Psoas muscle (tissue), 8 donors: ENCODE measurements at regions of chr11 and their contacts with region 1.

Region 1: GRCh38 chr11:114075891-114076441 is 16.5 kb downstream of the ZBTB16 start:
- DNase-seq: peak; percentile 65 to 76
- ATAC-seq: peak in 1 of 4 donors; percentile 4
- H3K4me3 ChIP-seq: peak overlapping the region; percentile 54
- H3K27ac ChIP-seq: peak overlapping the region; percentile 99
- H3K4me1 ChIP-seq: peaks cover 97% of the 10 kb centered on the region
- H3K27me3 ChIP-seq: no peaks in the 10 kb centered on the region
- CTCF ChIP-seq: peak; percentile 78

Region 2: GRCh38 chr11:114036156-114036811 is 39.7 kb before region 1 on chr11:
- intact Hi-C with region 1: no loop called
- DNase-seq: peak; percentile 88 to 94
- ATAC-seq: peak; percentile 85 to 93 (median 88)
- H3K4me3 ChIP-seq: peak overlapping the region; percentile 66
- H3K27ac ChIP-seq: peak overlapping the region; percentile 75
- H3K4me1 ChIP-seq: peaks cover 40% of the 10 kb centered on the region
- H3K27me3 ChIP-seq: no peaks in the 10 kb centered on the region
- CTCF ChIP-seq: peak; percentile 87

Region 3: DNA sequence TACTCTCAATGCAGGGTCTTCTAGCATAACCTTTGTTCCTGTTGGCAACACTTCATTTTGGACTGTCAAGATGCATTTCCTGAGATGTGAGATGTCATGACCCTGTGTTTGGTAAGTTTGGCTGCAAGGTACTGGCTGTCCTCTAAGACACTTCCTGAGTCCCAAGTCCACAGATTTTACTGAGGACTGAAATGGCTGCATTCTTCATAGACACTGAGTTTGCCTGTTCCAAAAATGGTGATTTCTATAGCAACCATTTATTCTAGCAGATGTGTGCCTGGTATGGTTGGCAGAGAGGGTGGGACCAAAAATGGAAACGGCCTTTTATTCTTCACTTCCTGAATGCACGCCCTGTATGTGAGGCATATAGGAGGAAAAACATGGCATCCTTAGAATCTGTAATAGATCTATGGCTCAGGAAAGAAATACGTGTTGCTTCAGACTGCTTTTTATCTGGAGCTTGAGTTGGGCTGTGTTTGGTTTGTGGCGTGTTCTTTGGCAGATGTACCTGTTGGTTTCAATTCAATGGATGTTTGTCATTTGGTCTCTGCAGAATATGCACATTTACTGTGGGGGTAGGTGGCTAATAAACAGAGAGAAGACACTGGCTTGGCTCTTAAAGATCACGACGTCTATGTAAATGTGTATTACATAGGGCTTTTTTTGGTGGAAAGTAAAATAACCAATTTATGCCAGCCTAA is 46.0 kb after region 1 on chr11:
- intact Hi-C with region 1: loop called in 1 of 2 experiments (anchors 5 kb)
- DNase-seq: no peak
- ATAC-seq: no peak
- H3K4me3 ChIP-seq: no peak overlapping the region
- H3K27ac ChIP-seq: peak overlapping the region; percentile 99
- H3K4me1 ChIP-seq: peaks cover 89% of the 10 kb centered on the region
- H3K27me3 ChIP-seq: no peaks in the 10 kb centered on the region
- CTCF ChIP-seq: no peak

Region 4: DNA sequence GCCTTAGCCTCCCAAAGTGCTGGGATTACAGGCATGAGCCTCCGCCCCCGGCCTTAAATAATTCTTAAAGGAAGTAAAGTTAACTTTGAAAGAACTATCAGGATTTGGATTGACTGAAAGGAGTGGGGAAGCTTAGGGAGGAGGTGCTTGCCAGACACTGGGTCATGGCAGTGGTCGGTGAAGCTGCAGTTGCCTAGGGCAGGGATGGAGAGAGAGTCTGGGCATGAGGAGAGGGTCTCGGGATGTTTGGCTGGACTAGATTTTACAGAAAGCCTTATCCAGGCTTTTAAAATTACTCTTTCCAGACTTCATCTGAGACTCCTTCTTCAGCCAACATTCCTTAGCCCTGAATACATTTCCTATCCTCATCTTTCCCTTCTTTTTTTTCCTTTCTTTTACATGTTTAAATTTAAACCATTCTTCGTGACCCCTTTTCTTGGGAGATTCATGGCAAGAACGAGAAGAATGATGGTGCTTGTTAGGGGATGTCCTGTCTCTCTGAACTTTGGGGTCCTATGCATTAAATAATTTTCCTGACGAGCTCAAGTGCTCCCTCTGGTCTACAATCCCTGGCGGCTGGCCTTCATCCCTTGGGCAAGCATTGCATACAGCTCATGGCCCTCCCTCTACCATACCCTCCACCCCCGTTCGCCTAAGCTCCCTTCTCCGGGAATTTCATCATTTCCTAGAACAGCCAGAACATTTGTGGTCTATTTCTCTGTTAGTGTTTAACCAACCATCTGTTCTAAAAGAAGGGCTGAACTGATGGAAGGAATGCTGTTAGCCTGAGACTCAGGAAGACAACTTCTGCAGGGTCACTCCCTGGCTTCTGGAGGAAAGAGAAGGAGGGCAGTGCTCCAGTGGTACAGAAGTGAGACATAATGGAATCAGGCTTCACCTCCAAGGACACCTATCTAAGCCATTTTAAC is 220.0 kb after region 1 on chr11 and contains the start of gene NNMT:
- intact Hi-C with region 1: no loop called
- DNase-seq: peak; percentile 83 to 87
- ATAC-seq: peak; percentile 59 to 76 (median 72)
- H3K4me3 ChIP-seq: peak within 1 kb of the TSS; percentile 72
- H3K27ac ChIP-seq: peak within 1 kb of the TSS; percentile 80
- H3K4me1 ChIP-seq: peaks cover 35% of the 10 kb centered on the region
- H3K27me3 ChIP-seq: peaks cover 0 to 2% (median 0%) of the 10 kb centered on the region in 3 donors
- CTCF ChIP-seq: no peak
- total RNA-seq, gene NNMT: 165 to 2,602 (median 604) TPM